Psoas muscle (tissue), 8 donors: ENCODE measurements at regions of chr6 and their contacts with region 1.

Region 1: DNA sequence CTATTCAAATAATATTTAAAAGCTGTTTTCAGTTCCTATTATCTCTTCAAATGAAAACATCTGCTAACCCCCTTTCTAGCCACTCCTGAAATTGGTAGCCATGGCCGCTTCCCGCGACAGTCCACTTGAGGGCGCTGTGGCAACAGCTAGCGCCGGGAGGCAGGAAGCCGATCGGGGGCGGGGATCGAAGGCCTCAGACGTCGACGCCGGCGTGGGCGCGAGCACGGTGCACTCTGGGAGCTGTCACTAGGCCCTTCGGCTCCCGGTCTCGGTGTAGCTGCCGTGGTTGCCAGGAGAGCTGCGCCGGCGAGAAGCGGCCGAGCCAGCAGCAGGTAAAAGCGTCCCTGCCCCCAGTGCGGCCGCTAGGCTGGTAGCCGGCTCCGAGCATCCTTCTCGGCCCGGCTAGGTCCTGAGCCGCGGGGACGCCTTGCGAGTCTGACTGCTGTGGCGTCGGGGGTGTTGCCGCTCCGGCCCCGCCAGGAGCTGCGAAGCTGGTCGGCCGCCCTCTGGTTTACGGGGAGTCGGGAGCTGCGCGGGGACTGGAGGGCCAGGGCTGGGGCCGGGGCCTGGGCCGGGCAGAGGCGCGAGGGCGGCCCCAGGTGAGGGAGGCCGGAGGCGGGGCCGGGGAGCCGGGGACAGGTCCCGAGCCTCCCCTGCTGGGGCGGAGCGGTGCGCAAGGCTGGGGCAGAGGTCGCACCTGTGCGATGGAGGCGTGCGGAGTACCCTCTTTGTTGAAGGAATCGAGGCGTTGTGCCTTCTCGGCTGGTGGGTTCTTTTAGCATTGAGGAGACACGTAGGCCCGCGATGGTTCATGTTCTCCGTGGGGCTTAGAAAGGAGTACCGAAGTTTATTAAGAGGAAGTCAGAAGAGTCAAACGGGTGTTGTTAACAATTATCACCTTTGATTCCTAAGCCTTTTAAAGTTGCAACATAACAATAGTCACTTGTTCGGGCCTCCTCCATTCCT is at the start of gene DOP1A:
- DNase-seq: peak; percentile 96 to 98
- ATAC-seq: peak; percentile 94 to 96 (median 95)
- H3K4me3 ChIP-seq: peak within 1 kb of the TSS; percentile 88
- H3K27ac ChIP-seq: peak within 1 kb of the TSS; percentile 88
- H3K4me1 ChIP-seq: peaks cover 42% of the 10 kb centered on the region
- H3K27me3 ChIP-seq: no peaks in the 10 kb centered on the region
- CTCF ChIP-seq: peak; percentile 99
- total RNA-seq, gene DOP1A: 12.7 to 14.0 (median 13.8) TPM

Region 2: DNA sequence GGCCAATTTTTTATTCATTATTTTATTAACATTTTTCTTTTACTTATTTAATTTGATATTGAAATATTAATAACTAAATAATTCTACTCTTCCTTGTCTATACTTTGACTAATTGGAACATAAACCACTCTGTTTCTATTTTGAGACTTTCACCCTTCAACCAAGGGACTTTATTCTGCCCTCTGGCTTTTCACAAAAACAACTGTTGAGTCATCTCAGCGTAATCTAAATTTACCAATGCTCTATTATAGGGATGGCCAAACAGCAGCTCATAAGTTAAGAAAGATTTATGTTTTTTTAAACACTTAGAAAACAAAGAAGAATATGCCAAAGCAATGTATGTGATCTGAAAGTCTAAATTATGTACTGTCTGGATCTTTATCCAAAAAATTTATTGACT is 46.4 kb after region 1 on chr6:
- intact Hi-C with region 1: loop called in 1 of 2 experiments (anchors 5 kb)
- DNase-seq: no peak
- ATAC-seq: peak; percentile 70 to 93 (median 77)
- H3K4me3 ChIP-seq: no peak overlapping the region
- H3K27ac ChIP-seq: peak overlapping the region; percentile 50
- H3K4me1 ChIP-seq: peaks cover 10% of the 10 kb centered on the region
- H3K27me3 ChIP-seq: no peaks in the 10 kb centered on the region
- CTCF ChIP-seq: no peak

Region 3: GRCh38 chr6:83192871-83193746 is 125.4 kb after region 1 on chr6 and contains the starts of genes PGM3 and RWDD2A:
- intact Hi-C with region 1: loop called in 1 of 2 experiments (anchors 5 kb)
- DNase-seq: peak; percentile 92
- ATAC-seq: peak; percentile 98 to 99 (median 98)
- H3K4me3 ChIP-seq: peak within 1 kb of the TSS; percentile 97
- H3K27ac ChIP-seq: peak within 1 kb of the TSS; percentile 88
- H3K4me1 ChIP-seq: peaks cover 7% of the 10 kb centered on the region
- H3K27me3 ChIP-seq: no peaks in the 10 kb centered on the region
- CTCF ChIP-seq: no peak
- total RNA-seq, gene PGM3: 12.5 to 15.5 (median 12.7) TPM
- total RNA-seq, gene RWDD2A: 1.7 to 2.3 (median 2.1) TPM

Region 4: GRCh38 chr6:83215131-83216047 is 147.7 kb after region 1 on chr6:
- intact Hi-C with region 1: loop called in 1 of 2 experiments (anchors 2 kb)
- DNase-seq: peak in 1 of 2 donors; percentile 37
- ATAC-seq: peak; percentile 69 to 92 (median 88)
- H3K4me3 ChIP-seq: no peak overlapping the region
- H3K27ac ChIP-seq: no peak overlapping the region
- H3K4me1 ChIP-seq: no peaks in the 10 kb centered on the region
- H3K27me3 ChIP-seq: no peaks in the 10 kb centered on the region
- CTCF ChIP-seq: peak; percentile 71

Region 5: GRCh38 chr6:83514866-83515466 is 447.2 kb after region 1 on chr6:
- intact Hi-C with region 1: loop called in 1 of 2 experiments (anchors 5 kb)
- DNase-seq: no peak
- ATAC-seq: peak in 2 of 4 donors; percentile 41 to 75
- H3K4me3 ChIP-seq: no peak overlapping the region
- H3K27ac ChIP-seq: no peak overlapping the region
- H3K4me1 ChIP-seq: peaks cover 4% of the 10 kb centered on the region
- H3K27me3 ChIP-seq: no peaks in the 10 kb centered on the region
- CTCF ChIP-seq: peak; percentile 85

Region 6: GRCh38 chr6:83859410-83860358 is 792.0 kb after region 1 on chr6 and contains the start of gene CYB5R4:
- intact Hi-C with region 1: loop called in 1 of 2 experiments (anchors 10 kb)
- DNase-seq: peak; percentile 94 to 97
- ATAC-seq: peak; percentile 99 to 100 (median 100)
- H3K4me3 ChIP-seq: peak within 1 kb of the TSS; percentile 93
- H3K27ac ChIP-seq: peak within 1 kb of the TSS; percentile 87
- H3K4me1 ChIP-seq: peaks cover 19% of the 10 kb centered on the region
- H3K27me3 ChIP-seq: peaks cover 0 to 8% (median 4%) of the 10 kb centered on the region in 3 donors
- CTCF ChIP-seq: peak; percentile 39
- total RNA-seq, gene CYB5R4: 9.3 to 15.1 (median 13.2) TPM